Vagina (tissue), 2 donors: ENCODE measurements at regions of chr3 and their contacts with region 1.

Region 1: DNA sequence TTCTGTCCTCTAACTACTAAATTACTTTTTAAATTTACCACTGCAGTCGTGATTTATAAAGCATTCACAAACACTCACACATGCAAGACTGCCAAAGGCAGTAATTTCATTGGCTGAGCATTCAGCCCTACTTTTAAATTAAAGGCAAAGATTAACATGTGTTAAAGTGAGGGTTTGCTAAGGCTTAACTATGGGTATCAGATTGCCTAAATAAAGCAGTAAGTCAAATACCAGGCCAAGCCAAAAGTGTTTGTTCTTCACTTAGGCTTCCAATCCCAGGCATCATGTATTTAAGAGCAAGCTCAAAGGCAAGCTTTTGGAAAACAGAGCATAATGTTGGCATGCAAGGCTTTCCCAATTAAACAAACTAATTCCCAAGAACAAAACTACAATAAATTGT is 187.3 kb downstream of the SUCNR1 start:
- DNase-seq: no peak
- H3K4me3 ChIP-seq: no peak overlapping the region
- H3K27ac ChIP-seq: no peak overlapping the region
- H3K4me1 ChIP-seq: no peaks in the 10 kb centered on the region
- H3K27me3 ChIP-seq: no peaks in the 10 kb centered on the region
- CTCF ChIP-seq: no peak
- POLR2A ChIP-seq: no peak

Region 2: GRCh38 chr3:153384464-153384863 is 1323.8 kb after region 1 on chr3:
- intact Hi-C with region 1: loop called (anchors 5 kb)
- DNase-seq: no peak
- H3K4me3 ChIP-seq: no peak overlapping the region
- H3K27ac ChIP-seq: no peak overlapping the region
- H3K4me1 ChIP-seq: no peaks in the 10 kb centered on the region
- H3K27me3 ChIP-seq: no peaks in the 10 kb centered on the region
- CTCF ChIP-seq: no peak
- POLR2A ChIP-seq: no peak